ENCODE measurements at regions of chr5 and their contacts with region 1.

Region 1: DNA sequence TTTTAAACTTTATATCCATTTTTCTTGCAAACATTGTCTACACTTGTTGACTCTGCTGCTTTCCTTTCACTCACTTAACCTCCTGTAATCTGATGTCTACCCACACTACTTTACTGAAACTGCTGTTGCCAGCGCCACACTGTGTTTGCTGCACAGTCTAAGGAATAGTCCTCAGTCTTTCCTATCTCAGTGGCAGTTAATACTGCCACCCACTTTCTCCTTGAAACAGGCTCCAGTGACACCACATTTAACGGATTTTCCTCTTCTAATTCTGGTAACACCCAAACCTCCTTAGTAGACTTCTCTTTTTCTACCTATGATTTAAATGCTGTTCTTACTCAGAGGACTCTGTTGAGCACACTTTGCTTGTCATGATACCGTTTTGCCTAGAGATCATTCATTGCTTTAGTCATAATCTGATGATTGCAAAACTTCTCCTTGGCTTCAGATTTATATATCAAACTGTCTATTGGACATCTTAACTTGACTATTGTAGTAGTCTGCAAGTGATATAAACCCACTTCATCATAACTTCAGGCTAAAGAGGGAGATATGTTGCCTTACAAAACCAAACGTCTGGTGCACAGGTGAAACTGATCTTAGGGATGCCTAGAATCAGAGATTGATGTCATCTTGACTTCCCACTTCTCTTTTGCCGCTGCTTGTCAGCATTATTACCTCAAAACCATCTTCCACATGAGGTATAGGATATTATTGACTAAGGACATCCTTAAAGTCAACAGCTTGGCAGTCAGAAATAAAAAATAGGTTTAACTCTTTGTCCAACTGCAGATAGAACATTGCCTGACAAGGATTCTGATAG is 94.1 kb downstream of the CDC42SE2 start:
- DNase-seq: peak; percentile 72
- H3K4me3 Mint-ChIP-seq: peak overlapping the region; percentile 66
- H3K27ac Mint-ChIP-seq: peak overlapping the region; percentile 97
- H3K4me1 Mint-ChIP-seq: peaks cover 64% of the 10 kb centered on the region
- H3K27me3 Mint-ChIP-seq: no peaks in the 10 kb centered on the region

Region 2: DNA sequence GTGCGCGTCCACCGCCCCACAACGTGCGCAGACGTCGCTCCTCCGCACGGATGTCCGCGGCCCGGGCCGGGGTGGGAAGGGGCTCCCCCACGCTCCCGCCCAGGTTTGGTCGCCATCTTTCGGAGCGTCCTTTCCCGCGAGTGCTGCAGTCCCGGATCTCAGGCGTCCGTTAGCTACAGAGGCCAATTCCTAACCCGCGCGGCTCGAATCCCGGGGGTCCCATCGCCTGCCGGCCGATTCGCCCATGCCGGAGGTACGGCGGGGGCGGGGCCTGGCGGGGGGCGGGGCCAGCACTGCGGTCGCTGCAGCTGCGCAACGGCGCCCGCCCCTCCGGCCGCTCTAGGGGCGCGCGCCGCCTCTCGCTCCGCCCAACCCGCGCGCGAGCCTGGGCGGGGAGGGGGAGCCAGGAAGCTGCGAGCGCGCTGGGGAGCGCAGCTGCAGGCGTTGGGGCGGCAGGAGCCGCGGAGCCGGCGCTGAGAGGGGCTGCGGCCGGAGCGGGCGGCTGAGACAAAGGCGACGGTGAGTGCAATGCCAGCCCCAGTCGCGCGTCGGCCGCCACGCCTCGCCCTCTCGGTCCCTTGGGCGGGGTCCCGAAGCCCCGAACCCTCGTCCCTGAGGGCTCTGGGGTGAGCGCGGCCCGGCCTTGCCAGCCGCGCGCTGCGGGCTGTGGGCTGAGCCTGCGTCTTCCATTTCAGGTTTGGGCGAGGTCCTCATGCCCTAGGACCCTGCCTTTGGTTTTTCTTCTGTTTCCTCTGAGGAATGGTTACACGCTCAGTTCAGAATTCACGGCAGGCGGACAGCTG is 94.1 kb before region 1 on chr5 and contains the start of gene CDC42SE2:
- CTCF ChIA-PET with region 1: no interaction called
- POLR2A ChIA-PET with region 1: interaction called, 3 read pairs
- intact Hi-C with region 1: loop called (anchors 1 kb)
- DNase-seq: peak; percentile 88
- H3K4me3 Mint-ChIP-seq: peak within 1 kb of the TSS; percentile 89
- H3K27ac Mint-ChIP-seq: peak within 1 kb of the TSS; percentile 95
- H3K4me1 Mint-ChIP-seq: peaks cover 48% of the 10 kb centered on the region
- H3K27me3 Mint-ChIP-seq: no peaks in the 10 kb centered on the region
- total RNA-seq, gene CDC42SE2: 103 to 104 TPM

Region 3: DNA sequence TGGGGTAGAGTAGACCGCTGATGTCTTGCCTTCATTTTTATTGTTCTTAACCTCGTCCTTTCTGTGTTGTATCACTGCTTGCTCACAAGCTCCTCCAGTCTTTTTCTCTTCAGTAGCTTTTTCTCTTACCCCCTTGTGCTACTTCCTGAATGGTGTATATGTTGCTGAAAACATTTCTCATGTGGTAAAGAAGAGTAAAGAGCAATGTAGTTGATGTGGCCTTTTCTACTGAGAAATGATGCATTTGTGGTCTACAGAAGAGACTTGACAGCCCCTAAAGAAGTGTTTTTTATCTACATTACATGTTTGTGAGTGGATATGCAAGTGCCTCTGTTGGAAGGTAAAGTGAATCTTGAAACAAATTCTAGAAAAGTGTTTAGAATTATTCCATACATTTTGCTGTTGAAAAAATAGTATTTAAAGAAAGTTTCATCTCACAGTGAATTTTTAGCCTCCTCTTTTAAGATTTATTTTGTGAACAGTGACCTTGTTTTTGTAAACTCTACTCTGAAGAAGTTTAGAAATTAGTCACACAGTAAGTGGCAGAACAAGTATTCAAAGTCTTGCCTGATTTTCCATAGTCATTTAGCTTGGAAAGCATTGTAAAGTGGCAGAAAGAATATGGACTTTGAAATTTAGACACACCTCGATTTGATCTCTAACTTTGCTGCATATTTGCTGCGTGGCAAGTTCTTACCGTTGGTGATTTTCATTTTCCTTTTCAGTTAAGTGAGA is 76.7 kb before region 1 on chr5:
- CTCF ChIA-PET with region 1: interaction called, 4 read pairs
- POLR2A ChIA-PET with region 1: no interaction called
- intact Hi-C with region 1: loop called (anchors 1 kb)
- DNase-seq: no peak
- H3K4me3 Mint-ChIP-seq: peak overlapping the region; percentile 68
- H3K27ac Mint-ChIP-seq: peak overlapping the region; percentile 98
- H3K4me1 Mint-ChIP-seq: peaks cover 86% of the 10 kb centered on the region
- H3K27me3 Mint-ChIP-seq: no peaks in the 10 kb centered on the region

Region 4: DNA sequence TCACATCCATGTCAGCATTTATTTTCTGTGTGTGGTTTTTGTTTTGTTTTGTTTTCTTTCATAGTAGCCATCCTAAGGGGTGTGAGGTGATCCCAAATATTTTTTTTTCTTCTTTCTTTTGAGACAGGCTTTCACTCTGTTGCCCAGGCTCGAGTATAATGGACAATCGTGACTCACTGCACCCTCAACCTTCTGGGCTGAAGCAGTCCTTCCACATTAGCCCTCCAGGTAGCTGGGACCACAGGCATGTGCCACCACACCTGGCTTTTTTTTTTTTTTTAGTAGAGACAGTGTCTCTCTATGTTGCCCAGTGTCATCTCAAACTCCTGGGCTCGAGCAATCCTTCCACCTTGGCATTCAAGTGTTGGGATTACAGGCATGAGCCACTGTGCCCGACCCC is 35.0 kb before region 1 on chr5:
- CTCF ChIA-PET with region 1: no interaction called
- POLR2A ChIA-PET with region 1: no interaction called
- intact Hi-C with region 1: loop called (anchors 1 kb)
- DNase-seq: no peak
- H3K4me3 Mint-ChIP-seq: peak overlapping the region; percentile 1
- H3K27ac Mint-ChIP-seq: peak overlapping the region; percentile 69
- H3K4me1 Mint-ChIP-seq: peaks cover 67% of the 10 kb centered on the region
- H3K27me3 Mint-ChIP-seq: no peaks in the 10 kb centered on the region

Region 5: GRCh38 chr5:131338051-131338453 is 19.9 kb before region 1 on chr5:
- CTCF ChIA-PET with region 1: interaction called, 4 read pairs
- POLR2A ChIA-PET with region 1: no interaction called
- intact Hi-C with region 1: loop called (anchors 2 kb)
- DNase-seq: no peak
- H3K4me3 Mint-ChIP-seq: peak overlapping the region; percentile 73
- H3K27ac Mint-ChIP-seq: peak overlapping the region; percentile 85
- H3K4me1 Mint-ChIP-seq: peaks cover 87% of the 10 kb centered on the region
- H3K27me3 Mint-ChIP-seq: no peaks in the 10 kb centered on the region